Activated CD4-positive, alpha-beta memory T cell treated with anti-CD3 and anti-CD28 coated beads for 36 hours (primary cell): ENCODE measurements at regions of chr4 and their contacts with region 1.

Region 1: DNA sequence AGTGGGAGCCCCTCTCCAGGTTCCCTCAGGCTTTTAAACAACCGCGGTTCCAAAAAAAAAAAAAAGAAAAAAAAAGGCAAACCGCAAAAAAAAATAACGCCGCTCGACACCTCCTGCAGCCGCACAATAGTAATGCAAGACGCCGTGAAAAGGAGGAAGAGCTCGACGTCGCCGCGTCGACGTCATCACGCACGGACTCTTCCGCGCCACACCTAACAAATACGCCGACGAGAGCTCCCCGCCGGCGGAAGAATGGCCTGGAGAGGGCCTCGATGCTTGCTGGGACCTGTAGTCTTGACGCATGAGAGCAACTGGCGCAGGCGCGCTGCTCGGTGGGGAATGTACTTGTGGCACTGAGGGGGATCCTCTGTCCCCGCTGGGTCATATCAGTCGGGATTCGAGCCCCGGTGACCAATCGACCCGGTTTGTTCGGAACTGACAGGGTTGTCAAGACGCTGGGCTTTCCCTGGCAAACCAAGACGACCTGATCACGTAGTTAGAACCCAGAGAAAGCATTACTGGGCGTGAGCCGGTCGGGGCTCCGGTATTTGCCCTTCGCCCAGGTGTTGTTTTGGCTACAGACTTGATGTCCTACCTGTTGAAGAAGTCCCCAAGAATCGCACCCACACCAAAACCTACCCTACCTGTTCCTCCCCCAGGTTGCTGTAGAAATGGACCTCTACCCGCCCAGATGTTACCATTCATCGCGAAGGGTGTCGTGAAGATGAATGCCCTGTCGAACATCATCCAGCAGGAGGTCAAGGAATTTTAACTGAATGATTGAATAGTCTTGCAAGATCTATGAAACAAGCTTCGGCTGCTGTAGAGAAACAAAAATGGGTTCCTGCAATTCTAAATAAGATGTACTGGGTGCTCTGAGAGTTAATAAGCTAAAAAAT is at the start of gene CBR4:
- DNase-seq: peak; percentile 97
- H3K4me3 Mint-ChIP-seq: peak within 1 kb of the TSS; percentile 92
- H3K27ac Mint-ChIP-seq: peak within 1 kb of the TSS; percentile 86
- H3K4me1 Mint-ChIP-seq: peaks cover 20% of the 10 kb centered on the region
- H3K27me3 Mint-ChIP-seq: no peaks in the 10 kb centered on the region
- total RNA-seq, gene CBR4: 18.0 to 19.7 TPM

Region 2: DNA sequence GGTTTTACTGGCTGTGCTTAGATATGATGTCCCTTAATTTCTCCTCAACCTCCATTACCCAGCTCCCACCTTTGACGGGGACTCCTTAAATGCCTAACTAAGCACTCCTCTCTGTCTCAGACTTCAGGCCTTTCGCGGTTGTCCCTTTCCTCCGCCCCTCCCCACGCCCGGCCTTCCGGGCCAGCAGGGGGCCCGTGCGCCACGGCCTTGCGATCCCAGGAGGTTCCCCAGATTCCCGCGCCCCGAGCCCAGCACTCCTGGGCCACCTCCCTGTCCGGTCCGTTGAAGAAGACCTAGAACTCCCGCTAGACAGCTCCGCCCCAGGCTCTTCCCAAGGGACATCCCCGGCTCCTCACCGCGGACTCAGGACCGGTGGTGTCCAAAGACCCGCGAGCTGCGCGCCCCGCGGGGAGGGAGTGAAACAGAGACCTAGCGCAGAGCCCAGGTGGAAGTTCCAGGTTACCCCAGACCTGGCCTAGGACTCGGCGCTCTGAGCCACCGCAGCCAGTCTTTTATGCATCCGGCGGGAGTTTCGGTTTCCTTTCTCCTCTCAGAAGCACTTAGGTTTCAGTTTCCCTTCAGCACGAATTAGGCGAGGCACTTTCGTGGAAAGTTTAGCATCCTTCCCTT is 692.0 kb before region 1 on chr4 and contains the start of gene DDX60:
- CTCF ChIA-PET with region 1: no interaction called
- POLR2A ChIA-PET with region 1: interaction called, 4 read pairs
- intact Hi-C with region 1: loop called (anchors 2 kb)
- DNase-seq: peak; percentile 89
- H3K4me3 Mint-ChIP-seq: peak within 1 kb of the TSS; percentile 84
- H3K27ac Mint-ChIP-seq: peak within 1 kb of the TSS; percentile 88
- H3K4me1 Mint-ChIP-seq: peaks cover 32% of the 10 kb centered on the region
- H3K27me3 Mint-ChIP-seq: no peaks in the 10 kb centered on the region
- total RNA-seq, gene DDX60: 24.1 to 28.9 TPM

Region 3: DNA sequence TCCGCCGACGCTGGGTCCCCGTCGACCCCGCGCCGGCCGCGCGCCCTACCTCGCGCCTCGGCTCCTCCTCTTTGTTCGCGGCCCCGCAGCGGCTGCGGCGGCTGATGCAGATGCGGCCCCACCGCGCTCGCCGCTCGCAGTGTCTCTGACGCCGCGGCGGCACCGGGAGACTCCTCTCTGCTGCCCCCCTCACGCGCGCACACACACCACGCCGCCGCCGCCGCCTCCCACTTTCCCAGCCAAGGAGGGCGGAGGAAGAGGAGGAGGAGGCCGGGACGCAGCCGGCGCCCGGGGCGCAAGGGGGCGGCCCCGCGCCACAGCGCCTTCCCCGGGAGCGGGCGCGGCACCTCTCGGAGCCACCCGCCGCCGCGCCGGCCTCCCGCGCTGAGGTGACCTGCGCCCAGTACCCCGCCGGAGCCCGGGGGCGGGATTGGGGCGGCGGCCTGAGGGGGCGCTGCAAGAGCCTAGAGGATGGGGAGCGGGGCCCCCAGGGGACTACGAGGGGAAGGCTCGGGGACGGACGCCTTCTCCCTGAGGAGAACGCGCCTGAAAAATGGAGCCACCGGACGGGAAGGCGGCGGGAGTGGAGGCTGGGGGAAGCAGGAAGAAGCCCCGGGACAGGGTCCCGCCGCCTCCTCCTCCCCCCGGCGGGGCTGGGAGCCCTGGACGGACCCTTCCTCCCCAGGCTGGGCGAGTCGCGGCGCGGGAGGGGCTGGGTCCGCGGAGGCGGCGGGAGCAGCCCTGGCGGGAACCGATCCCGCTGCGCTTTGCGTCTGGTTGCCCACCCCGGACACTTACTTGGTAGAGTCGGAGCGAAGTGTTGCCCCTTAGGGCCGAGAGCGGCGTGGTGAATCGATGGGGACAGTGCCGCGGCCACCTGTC is 260.7 kb after region 1 on chr4 and contains the start of gene SH3RF1:
- CTCF ChIA-PET with region 1: no interaction called
- POLR2A ChIA-PET with region 1: no interaction called
- intact Hi-C with region 1: loop called (anchors 5 kb)
- DNase-seq: peak; percentile 40
- H3K4me3 Mint-ChIP-seq: peak within 1 kb of the TSS; percentile 67
- H3K27ac Mint-ChIP-seq: no peak within 1 kb of the TSS
- H3K4me1 Mint-ChIP-seq: peaks cover 3% of the 10 kb centered on the region
- H3K27me3 Mint-ChIP-seq: peaks cover 44% of the 10 kb centered on the region
- total RNA-seq, gene SH3RF1: 0.19 to 0.24 TPM

Region 4: DNA sequence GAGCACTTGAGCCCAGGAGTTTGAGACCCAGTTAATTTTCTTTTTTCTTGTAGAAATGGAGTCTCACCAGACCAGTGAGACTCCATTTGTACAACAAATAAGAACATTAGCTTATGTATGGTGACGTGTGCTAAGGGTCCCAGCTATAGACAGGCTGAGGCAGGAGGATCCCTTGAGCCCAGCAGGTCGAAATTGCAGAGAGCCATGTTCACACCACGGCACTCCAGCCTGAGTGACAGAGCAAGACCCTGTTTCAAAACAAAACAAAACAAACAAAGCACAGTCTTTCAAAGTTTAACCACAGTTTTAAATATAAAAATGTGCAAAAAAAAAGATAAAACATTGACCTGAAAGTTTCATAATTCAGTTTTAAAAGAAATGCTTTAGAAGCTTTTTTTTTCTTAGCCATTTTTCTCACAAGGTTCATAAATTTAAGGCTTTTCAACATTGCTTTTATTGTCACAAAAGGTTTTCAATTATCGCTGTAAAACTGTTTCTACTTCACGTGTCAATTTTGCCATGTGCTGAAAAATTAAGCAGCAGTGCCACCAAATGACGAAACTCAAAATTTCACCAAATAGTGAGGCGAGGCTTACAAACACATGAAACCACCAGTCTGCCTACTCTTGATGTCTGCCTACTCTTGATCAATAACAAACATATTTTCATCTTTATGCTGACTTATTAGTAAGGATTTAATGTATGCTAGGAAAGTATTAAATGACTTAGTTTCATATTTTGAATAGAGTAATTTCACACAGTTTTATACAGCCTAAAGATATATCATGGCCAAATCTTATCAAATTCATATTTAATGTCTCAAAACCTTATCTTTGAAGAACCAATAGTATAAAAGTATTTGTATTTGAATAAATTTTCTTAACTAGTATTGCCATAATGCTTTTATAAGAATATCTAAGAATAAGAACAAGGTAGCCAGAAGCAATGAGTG is 475.7 kb after region 1 on chr4:
- CTCF ChIA-PET with region 1: no interaction called
- POLR2A ChIA-PET with region 1: no interaction called
- intact Hi-C with region 1: loop called (anchors 5 kb)
- DNase-seq: peak; percentile 43
- H3K4me3 Mint-ChIP-seq: no peak overlapping the region
- H3K27ac Mint-ChIP-seq: no peak overlapping the region
- H3K4me1 Mint-ChIP-seq: peaks cover 2% of the 10 kb centered on the region
- H3K27me3 Mint-ChIP-seq: no peaks in the 10 kb centered on the region

Region 5: GRCh38 chr4:169757575-169758184 is 747.3 kb after region 1 on chr4 and contains the start of gene HPF1:
- CTCF ChIA-PET with region 1: no interaction called
- POLR2A ChIA-PET with region 1: no interaction called
- intact Hi-C with region 1: loop called (anchors 1 kb)
- DNase-seq: peak; percentile 97
- H3K4me3 Mint-ChIP-seq: peak within 1 kb of the TSS; percentile 83
- H3K27ac Mint-ChIP-seq: peak within 1 kb of the TSS; percentile 70
- H3K4me1 Mint-ChIP-seq: peaks cover 24% of the 10 kb centered on the region
- H3K27me3 Mint-ChIP-seq: no peaks in the 10 kb centered on the region
- total RNA-seq, gene HPF1: 36.6 to 41.1 TPM